ENCODE measurements at regions of chr1 and their contacts with region 1.

Region 1: DNA sequence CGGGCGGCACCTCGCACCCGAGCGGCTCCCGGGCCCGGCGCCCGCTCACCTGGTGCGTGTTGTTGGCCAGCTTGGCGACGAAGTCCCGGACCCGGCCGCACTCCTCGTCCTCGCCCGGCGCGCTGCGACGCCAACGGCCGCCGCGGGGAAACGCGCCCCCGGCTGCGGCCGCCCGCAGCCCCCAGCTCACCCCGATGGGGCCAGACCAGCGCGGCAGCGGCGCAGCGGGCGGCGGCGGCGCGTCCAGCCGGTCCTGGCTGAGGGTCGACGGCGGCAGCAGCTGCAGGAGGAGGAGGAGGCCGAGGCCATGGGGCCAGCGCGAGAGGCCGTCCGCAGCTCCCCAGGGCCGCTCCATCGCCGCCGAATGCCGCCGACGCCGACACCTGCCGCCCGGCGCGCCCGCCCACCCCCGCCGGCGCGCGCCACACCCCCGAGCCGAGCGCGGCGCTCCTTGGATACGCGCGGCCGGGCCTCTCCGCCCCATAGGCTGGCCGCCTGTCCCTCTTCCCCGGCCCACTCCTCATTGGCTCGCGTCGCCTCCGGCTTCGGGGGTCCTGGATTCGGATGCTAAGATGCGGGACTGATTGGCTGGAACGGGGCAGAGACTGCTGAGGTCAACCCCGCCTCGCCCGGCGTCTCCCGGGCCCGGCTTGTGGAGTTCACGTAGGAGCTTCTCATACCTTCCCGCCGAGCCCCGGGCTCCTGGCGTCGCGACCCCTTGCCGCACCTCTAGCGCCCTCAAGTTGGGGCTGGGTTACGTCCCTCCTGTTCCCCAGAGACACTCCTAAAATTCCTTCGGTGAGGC is at the start of gene SORT1:
- DNase-seq: peak; percentile 77
- H3K4me3 Mint-ChIP-seq: peak within 1 kb of the TSS; percentile 78
- H3K27ac Mint-ChIP-seq: no peak within 1 kb of the TSS
- H3K4me1 Mint-ChIP-seq: peaks cover 24% of the 10 kb centered on the region
- H3K27me3 Mint-ChIP-seq: no peaks in the 10 kb centered on the region
- CTCF ChIP-seq: no peak
- total RNA-seq, gene SORT1: 13.3 TPM in 2 replicates

Region 2: GRCh38 chr1:109090196-109091077 is 307.3 kb before region 1 on chr1 and contains the start of gene TMEM167B:
- CTCF ChIA-PET with region 1: interaction called, 3 read pairs
- POLR2A ChIA-PET with region 1: interaction called, 11 read pairs
- intact Hi-C with region 1: no loop called
- DNase-seq: peak; percentile 91
- H3K4me3 Mint-ChIP-seq: peak within 1 kb of the TSS; percentile 80
- H3K27ac Mint-ChIP-seq: peak within 1 kb of the TSS; percentile 96
- H3K4me1 Mint-ChIP-seq: peaks cover 12% of the 10 kb centered on the region
- H3K27me3 Mint-ChIP-seq: no peaks in the 10 kb centered on the region
- CTCF ChIP-seq: no peak
- total RNA-seq, gene TMEM167B: 30.2 and 34.3 TPM in 2 replicates

Region 3: GRCh38 chr1:109201123-109201703 is 196.5 kb before region 1 on chr1:
- CTCF ChIA-PET with region 1: interaction called, 17 read pairs
- POLR2A ChIA-PET with region 1: interaction called, 13 read pairs
- intact Hi-C with region 1: loop called (anchors 1 kb)
- DNase-seq: peak; percentile 93
- H3K4me3 Mint-ChIP-seq: no peak overlapping the region
- H3K27ac Mint-ChIP-seq: no peak overlapping the region
- H3K4me1 Mint-ChIP-seq: peaks cover 28% of the 10 kb centered on the region
- H3K27me3 Mint-ChIP-seq: no peaks in the 10 kb centered on the region
- CTCF ChIP-seq: peak; percentile 76

Region 4: DNA sequence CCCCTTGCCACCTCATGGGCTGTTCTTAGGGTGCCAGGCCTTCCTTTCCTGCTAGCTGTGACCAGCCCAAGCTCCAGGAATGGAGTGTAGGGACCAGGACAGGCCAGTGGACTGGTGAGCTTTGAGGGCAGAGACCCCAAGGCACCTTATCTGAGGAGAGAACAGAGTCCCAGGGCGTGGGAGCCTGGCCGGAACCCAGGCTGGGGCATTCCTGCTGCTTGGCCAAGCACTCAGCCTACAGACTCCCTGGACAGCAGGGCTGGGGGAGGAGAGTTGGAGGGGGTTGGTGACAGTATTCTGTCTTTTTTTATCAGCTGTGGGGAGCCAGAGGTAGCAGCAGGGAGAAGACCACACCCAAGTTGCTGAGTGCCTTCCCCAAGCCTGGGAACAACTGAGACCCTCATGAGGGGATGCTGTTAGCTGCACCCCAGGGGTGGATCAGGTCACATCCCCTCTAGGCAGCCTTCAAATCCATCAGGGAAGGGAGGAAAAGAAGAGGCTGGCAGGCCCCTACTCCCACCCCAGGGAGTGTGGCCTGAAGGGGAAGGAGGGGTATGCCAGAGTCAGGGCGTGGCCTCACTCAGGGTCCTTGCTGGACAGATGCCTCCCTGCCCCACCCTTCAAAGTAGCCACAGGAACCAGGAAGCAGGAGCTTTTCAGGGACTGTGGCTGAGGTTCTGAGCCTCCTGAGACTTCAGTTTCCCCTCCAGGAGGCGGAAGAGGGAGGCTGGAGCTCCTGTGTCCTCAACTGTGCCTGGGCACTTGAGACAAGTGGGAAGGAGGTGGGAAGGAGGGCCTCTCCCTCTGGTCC is 143.4 kb before region 1 on chr1:
- CTCF ChIA-PET with region 1: interaction called, 17 read pairs
- POLR2A ChIA-PET with region 1: interaction called, 4 read pairs
- intact Hi-C with region 1: no loop called
- DNase-seq: no peak
- H3K4me3 Mint-ChIP-seq: no peak overlapping the region
- H3K27ac Mint-ChIP-seq: no peak overlapping the region
- H3K4me1 Mint-ChIP-seq: peaks cover 21% of the 10 kb centered on the region
- H3K27me3 Mint-ChIP-seq: no peaks in the 10 kb centered on the region
- CTCF ChIP-seq: no peak

Region 5: DNA sequence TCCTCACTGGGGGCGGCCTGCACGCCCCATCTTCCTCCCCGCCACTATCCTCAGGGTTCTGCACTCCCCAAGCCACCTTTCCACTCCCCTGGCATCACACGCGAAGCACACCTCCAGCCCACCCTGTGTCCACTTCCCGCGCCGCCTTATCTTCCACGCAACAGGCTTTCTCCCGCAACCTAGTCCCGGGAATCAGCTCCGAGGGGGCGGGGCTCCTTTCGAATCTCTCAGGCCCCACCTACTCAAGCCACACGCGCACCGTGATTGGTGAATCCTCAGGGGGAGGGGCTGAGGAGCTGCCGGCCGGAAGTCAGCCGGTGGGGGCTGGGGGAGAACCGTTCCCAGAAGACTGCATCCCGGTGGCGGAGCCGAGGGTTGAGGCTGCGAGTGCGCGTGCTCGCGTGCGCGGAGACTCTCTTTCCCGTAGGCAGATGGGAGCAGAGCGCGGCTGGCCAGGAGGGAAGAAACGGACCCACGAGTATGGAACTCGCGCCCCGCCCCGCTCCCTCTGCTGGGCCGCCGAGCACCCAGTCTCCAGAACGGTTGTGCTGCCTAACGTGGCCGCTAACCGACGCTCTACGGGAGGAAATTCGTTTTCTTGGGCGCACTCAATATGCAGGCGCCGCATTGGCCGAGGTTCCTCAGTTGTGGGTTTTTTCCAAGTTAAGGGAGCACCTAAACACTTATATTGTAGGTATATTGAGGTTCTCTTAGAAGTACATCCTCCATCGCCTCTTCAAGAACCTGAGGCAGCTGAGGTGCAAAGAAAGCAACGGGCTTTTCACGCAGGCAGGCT is 114.6 kb before region 1 on chr1 and contains the start of gene PSRC1:
- CTCF ChIA-PET with region 1: interaction called, 102 read pairs
- POLR2A ChIA-PET with region 1: interaction called, 35 read pairs
- intact Hi-C with region 1: no loop called
- DNase-seq: peak; percentile 96
- H3K4me3 Mint-ChIP-seq: peak within 1 kb of the TSS; percentile 100
- H3K27ac Mint-ChIP-seq: peak within 1 kb of the TSS; percentile 96
- H3K4me1 Mint-ChIP-seq: peaks cover 27% of the 10 kb centered on the region
- H3K27me3 Mint-ChIP-seq: no peaks in the 10 kb centered on the region
- CTCF ChIP-seq: peak; percentile 22
- total RNA-seq, gene PSRC1: 13.0 and 19.4 TPM in 2 replicates

Region 6: GRCh38 chr1:109426278-109427170 is 28.8 kb after region 1 on chr1 and contains the start of gene PSMA5:
- CTCF ChIA-PET with region 1: interaction called, 4 read pairs
- POLR2A ChIA-PET with region 1: interaction called, 17 read pairs
- intact Hi-C with region 1: no loop called
- DNase-seq: peak; percentile 100
- H3K4me3 Mint-ChIP-seq: peak within 1 kb of the TSS; percentile 95
- H3K27ac Mint-ChIP-seq: peak within 1 kb of the TSS; percentile 90
- H3K4me1 Mint-ChIP-seq: peaks cover 24% of the 10 kb centered on the region
- H3K27me3 Mint-ChIP-seq: no peaks in the 10 kb centered on the region
- CTCF ChIP-seq: no peak
- total RNA-seq, gene PSMA5: 109 and 113 TPM in 2 replicates

Region 7: GRCh38 chr1:109655601-109656519 is 258.1 kb after region 1 on chr1 and contains the start of gene GSTM4:
- CTCF ChIA-PET with region 1: no interaction called
- POLR2A ChIA-PET with region 1: no interaction called
- intact Hi-C with region 1: no loop called
- DNase-seq: peak; percentile 52
- H3K4me3 Mint-ChIP-seq: peak within 1 kb of the TSS; percentile 81
- H3K27ac Mint-ChIP-seq: peak within 1 kb of the TSS; percentile 67
- H3K4me1 Mint-ChIP-seq: no peaks in the 10 kb centered on the region
- H3K27me3 Mint-ChIP-seq: peaks cover 32% of the 10 kb centered on the region
- CTCF ChIP-seq: no peak
- total RNA-seq, gene GSTM4: 4.7 and 5.8 TPM in 2 replicates